ENCODE measurements at regions of chr7 and their contacts with region 1.

Region 1: GRCh38 chr7:121366852-121367431 is 29.2 kb downstream of the FAM3C start:
- DNase-seq: peak; percentile 43

Region 2: GRCh38 chr7:120526902-120527509 is 839.9 kb before region 1 on chr7:
- in situ Hi-C with region 1: no loop called
- DNase-seq: no peak

Region 3: GRCh38 chr7:121547544-121548092 is 180.7 kb after region 1 on chr7:
- in situ Hi-C with region 1: loop called (anchors 25 kb)
- DNase-seq: peak; percentile 56

Measured in KBM-7 (cell line).